Activated naive CD4-positive, alpha-beta T cell treated with anti-CD3 and anti-CD28 coated beads, Interleukin-2, amount 10 ng/mL, durations not matched to agents 7 days and 5 days (primary cell): ENCODE measurements at regions of chr16 and their contacts with region 1.

Region 1: DNA sequence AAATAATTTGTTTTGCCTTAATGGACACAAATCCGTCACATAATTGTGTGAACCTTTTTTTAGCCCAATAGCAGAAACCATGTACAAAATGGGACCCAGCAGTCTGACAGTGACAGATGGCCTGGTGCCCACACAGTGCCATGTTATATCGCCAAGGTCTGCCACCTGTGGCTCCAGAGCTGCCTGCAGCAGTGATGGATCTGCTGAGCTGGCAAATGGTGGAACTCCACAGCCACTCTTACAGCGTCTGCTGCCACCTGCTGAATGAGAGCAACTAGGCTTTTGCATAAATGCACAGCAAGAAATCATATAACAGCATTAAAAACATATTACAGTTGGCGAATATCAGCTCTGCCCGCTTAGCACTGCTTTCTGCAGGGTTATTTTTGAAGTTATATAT is 59.4 kb downstream of the NUP93 start:
- DNase-seq: peak; percentile 66
- H3K4me3 Mint-ChIP-seq: no peak overlapping the region
- H3K27ac Mint-ChIP-seq: no peak overlapping the region
- H3K4me1 Mint-ChIP-seq: no peaks in the 10 kb centered on the region
- H3K27me3 Mint-ChIP-seq: no peaks in the 10 kb centered on the region

Region 2: GRCh38 chr16:56389554-56389953 is 399.8 kb before region 1 on chr16:
- CTCF ChIA-PET with region 1: no interaction called
- DNase-seq: no peak
- H3K4me3 Mint-ChIP-seq: no peak overlapping the region
- H3K27ac Mint-ChIP-seq: no peak overlapping the region
- H3K4me1 Mint-ChIP-seq: no peaks in the 10 kb centered on the region
- H3K27me3 Mint-ChIP-seq: no peaks in the 10 kb centered on the region

Region 3: GRCh38 chr16:56576585-56577293 is 212.6 kb before region 1 on chr16:
- CTCF ChIA-PET with region 1: interaction called, 27 read pairs
- DNase-seq: peak; percentile 91
- H3K4me3 Mint-ChIP-seq: no peak overlapping the region
- H3K27ac Mint-ChIP-seq: no peak overlapping the region
- H3K4me1 Mint-ChIP-seq: peaks cover 7% of the 10 kb centered on the region
- H3K27me3 Mint-ChIP-seq: peaks cover 33% of the 10 kb centered on the region

Region 4: GRCh38 chr16:56635441-56635967 is 153.9 kb before region 1 on chr16:
- CTCF ChIA-PET with region 1: no interaction called
- DNase-seq: peak; percentile 35
- H3K4me3 Mint-ChIP-seq: peak overlapping the region; percentile 40
- H3K27ac Mint-ChIP-seq: no peak overlapping the region
- H3K4me1 Mint-ChIP-seq: peaks cover 41% of the 10 kb centered on the region
- H3K27me3 Mint-ChIP-seq: peaks cover 100% of the 10 kb centered on the region

Region 5: GRCh38 chr16:56851671-56852400 is 62.5 kb after region 1 on chr16:
- CTCF ChIA-PET with region 1: interaction called, 21 read pairs
- DNase-seq: no peak
- H3K4me3 Mint-ChIP-seq: no peak overlapping the region
- H3K27ac Mint-ChIP-seq: no peak overlapping the region
- H3K4me1 Mint-ChIP-seq: peaks cover 25% of the 10 kb centered on the region
- H3K27me3 Mint-ChIP-seq: peaks cover 14% of the 10 kb centered on the region

Region 6: DNA sequence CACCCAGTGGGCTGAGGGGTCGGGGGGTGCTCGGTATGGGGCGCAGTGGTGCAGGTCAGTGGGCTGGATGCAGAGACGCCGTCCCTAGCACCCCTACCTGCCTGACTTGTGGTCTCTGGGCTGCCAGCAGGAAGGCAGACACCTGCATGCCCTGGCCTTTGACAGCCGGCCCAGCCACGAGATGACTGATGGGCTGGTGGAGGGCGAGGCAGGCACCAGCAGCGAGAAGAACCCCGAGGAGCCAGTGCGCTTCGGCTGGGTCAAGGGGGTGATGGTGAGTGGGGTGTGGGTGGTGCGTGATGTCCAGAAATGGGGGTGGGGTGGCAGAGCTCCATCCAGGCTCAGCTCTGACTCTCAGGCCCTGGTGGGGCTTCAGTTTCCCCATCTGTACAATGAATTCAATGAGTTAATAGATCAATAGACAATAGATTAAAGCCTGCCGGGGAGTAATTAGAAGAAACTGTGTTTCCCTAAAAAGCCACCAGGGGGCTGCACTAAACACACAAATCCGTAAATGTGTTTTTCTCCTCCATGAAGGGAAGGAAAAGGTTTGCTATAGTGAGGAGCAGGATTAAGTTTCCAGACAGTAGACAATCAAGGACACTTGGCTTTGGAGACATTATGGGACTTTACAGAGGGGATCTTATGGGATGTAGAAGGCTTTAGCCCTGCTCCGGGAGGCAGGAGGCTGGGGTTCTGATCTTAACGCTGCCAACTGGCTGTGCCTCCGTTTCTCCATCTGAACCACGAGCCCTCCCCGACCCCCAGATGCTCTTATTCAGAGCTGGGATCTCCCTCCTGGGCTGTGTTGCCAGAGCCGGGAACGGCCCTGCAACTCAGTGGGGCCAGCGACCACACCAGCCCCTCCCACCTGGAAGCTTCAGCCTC is 77.8 kb after region 1 on chr16:
- CTCF ChIA-PET with region 1: interaction called, 17 read pairs
- DNase-seq: peak; percentile 55
- H3K4me3 Mint-ChIP-seq: no peak overlapping the region
- H3K27ac Mint-ChIP-seq: no peak overlapping the region
- H3K4me1 Mint-ChIP-seq: peaks cover 18% of the 10 kb centered on the region
- H3K27me3 Mint-ChIP-seq: no peaks in the 10 kb centered on the region

Region 7: GRCh38 chr16:56909527-56909979 is 120.2 kb after region 1 on chr16:
- CTCF ChIA-PET with region 1: no interaction called
- DNase-seq: no peak
- H3K4me3 Mint-ChIP-seq: no peak overlapping the region
- H3K27ac Mint-ChIP-seq: no peak overlapping the region
- H3K4me1 Mint-ChIP-seq: peaks cover 24% of the 10 kb centered on the region
- H3K27me3 Mint-ChIP-seq: peaks cover 50% of the 10 kb centered on the region

Region 8: GRCh38 chr16:56950881-56951771 is 161.8 kb after region 1 on chr16:
- CTCF ChIA-PET with region 1: interaction called, 10 read pairs
- DNase-seq: peak; percentile 75
- H3K4me3 Mint-ChIP-seq: no peak overlapping the region
- H3K27ac Mint-ChIP-seq: no peak overlapping the region
- H3K4me1 Mint-ChIP-seq: peaks cover 19% of the 10 kb centered on the region
- H3K27me3 Mint-ChIP-seq: no peaks in the 10 kb centered on the region